Psoas muscle (tissue), 8 donors: ENCODE measurements at regions of chr2 and their contacts with region 1.

Region 1: DNA sequence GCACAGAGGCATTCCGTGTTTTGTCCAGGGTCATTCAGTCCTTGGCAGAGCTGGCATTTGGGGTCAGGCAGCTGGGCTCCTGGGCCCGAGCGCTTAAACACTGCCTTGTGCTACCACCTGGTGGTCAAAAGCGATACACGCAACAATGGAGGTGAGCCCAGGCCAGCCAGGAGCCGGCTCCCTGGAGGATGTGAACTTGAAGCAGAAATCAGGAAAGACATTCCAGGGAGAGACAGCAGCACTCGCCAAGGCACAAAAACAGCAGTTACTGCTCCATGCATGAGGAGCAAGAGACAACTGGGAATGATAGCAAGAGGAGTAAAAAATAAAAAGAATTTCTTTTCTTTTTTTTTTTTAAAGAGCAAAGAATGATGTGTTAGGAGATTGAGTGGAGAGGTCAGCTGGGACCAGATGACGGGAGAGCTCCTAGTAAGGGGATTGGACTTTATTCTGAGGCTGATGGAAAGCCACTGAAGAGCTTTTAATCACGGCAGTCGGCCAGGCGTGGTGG is 20.7 kb downstream of the SCYGR8 start:
- DNase-seq: peak; percentile 70 to 80
- ATAC-seq: peak; percentile 83 to 96 (median 92)
- H3K4me3 ChIP-seq: no peak overlapping the region
- H3K27ac ChIP-seq: no peak overlapping the region
- H3K4me1 ChIP-seq: no peaks in the 10 kb centered on the region
- H3K27me3 ChIP-seq: no peaks in the 10 kb centered on the region
- CTCF ChIP-seq: peak; percentile 83

Region 2: GRCh38 chr2:227394401-227394800 is 372.0 kb before region 1 on chr2:
- intact Hi-C with region 1: no loop called
- DNase-seq: no peak
- ATAC-seq: no peak
- H3K4me3 ChIP-seq: no peak overlapping the region
- H3K27ac ChIP-seq: no peak overlapping the region
- H3K4me1 ChIP-seq: no peaks in the 10 kb centered on the region
- H3K27me3 ChIP-seq: no peaks in the 10 kb centered on the region
- CTCF ChIP-seq: no peak

Region 3: GRCh38 chr2:227406177-227407031 is 360.0 kb before region 1 on chr2:
- intact Hi-C with region 1: loop called (anchors 2 to 10 kb)
- DNase-seq: no peak
- ATAC-seq: peak; percentile 56 to 80 (median 67)
- H3K4me3 ChIP-seq: no peak overlapping the region
- H3K27ac ChIP-seq: peak overlapping the region; percentile 55
- H3K4me1 ChIP-seq: peaks cover 14% of the 10 kb centered on the region
- H3K27me3 ChIP-seq: peaks cover 0 to 7% (median 3%) of the 10 kb centered on the region in 3 donors
- CTCF ChIP-seq: peak; percentile 53

Region 4: GRCh38 chr2:227471924-227472264 is 294.5 kb before region 1 on chr2 and contains the start of gene AGFG1:
- intact Hi-C with region 1: loop called (anchors 5 kb)
- DNase-seq: peak; percentile 79 to 90
- ATAC-seq: peak; percentile 92 to 95 (median 93)
- H3K4me3 ChIP-seq: peak within 1 kb of the TSS; percentile 91
- H3K27ac ChIP-seq: peak within 1 kb of the TSS; percentile 80
- H3K4me1 ChIP-seq: peaks cover 13% of the 10 kb centered on the region
- H3K27me3 ChIP-seq: no peaks in the 10 kb centered on the region
- CTCF ChIP-seq: peak; percentile 100
- total RNA-seq, gene AGFG1: 54.9 to 68.2 (median 58.9) TPM

Region 5: DNA sequence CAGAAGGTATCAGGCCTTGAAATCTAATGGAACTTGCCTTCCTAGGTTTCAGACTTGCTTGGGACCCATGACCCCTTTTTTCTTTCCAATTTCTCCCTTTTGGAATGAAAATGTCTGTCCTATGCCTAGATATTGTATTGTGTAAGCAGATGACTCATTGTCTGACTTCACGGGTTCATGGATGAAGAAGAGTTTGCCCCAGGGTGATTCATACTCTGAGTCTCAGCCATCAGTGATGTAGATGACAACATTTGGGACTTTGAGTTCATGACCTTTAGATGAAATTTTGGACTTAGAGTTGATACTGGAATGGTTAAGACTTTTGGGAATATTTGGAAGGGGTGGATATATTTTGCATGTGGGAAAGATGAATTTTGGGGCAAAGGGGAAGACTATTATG is 111.0 kb before region 1 on chr2:
- intact Hi-C with region 1: loop called in 1 of 2 experiments (anchors 5 kb)
- DNase-seq: no peak
- ATAC-seq: peak; percentile 42 to 80 (median 68)
- H3K4me3 ChIP-seq: no peak overlapping the region
- H3K27ac ChIP-seq: no peak overlapping the region
- H3K4me1 ChIP-seq: no peaks in the 10 kb centered on the region
- H3K27me3 ChIP-seq: no peaks in the 10 kb centered on the region
- CTCF ChIP-seq: no peak